Prostate gland (tissue), 2 donors: ENCODE measurements at regions of chr17 and their contacts with region 1.

Region 1: GRCh38 chr17:27332485-27333409 is 38.8 kb downstream of the WSB1 start:
- DNase-seq: peak; percentile 95
- H3K4me3 ChIP-seq: peak overlapping the region; percentile 28 to 39
- H3K27ac ChIP-seq: peak overlapping the region; percentile 82 to 86
- H3K4me1 ChIP-seq: peaks cover 3% of the 10 kb centered on the region
- H3K27me3 ChIP-seq: no peaks in the 10 kb centered on the region
- CTCF ChIP-seq: peak; percentile 69 to 97 (median 94)
- POLR2A ChIP-seq: no peak

Region 2: GRCh38 chr17:27236717-27237315 is 95.9 kb before region 1 on chr17:
- intact Hi-C with region 1: loop called (anchors 2 kb)
- DNase-seq: peak; percentile 84
- H3K4me3 ChIP-seq: no peak overlapping the region
- H3K27ac ChIP-seq: no peak overlapping the region
- H3K4me1 ChIP-seq: no peaks in the 10 kb centered on the region
- H3K27me3 ChIP-seq: no peaks in the 10 kb centered on the region
- CTCF ChIP-seq: peak; percentile 82 to 94 (median 92)
- POLR2A ChIP-seq: no peak

Region 3: GRCh38 chr17:27293898-27294688 is 38.7 kb before region 1 on chr17 and contains the start of gene WSB1:
- intact Hi-C with region 1: loop called (anchors 1 kb)
- DNase-seq: peak; percentile 94
- H3K4me3 ChIP-seq: peak within 1 kb of the TSS; percentile 82 to 96
- H3K27ac ChIP-seq: peak within 1 kb of the TSS; percentile 99 to 100
- H3K4me1 ChIP-seq: no peaks in the 10 kb centered on the region
- H3K27me3 ChIP-seq: no peaks in the 10 kb centered on the region
- CTCF ChIP-seq: peak in 3 of 4 experiments; percentile 4 to 40 (median 17)
- POLR2A ChIP-seq: peak; percentile 99
- total RNA-seq, gene WSB1: 45.7 to 116 TPM

Region 4: GRCh38 chr17:27390540-27390939 is 57.8 kb after region 1 on chr17:
- intact Hi-C with region 1: no loop called
- DNase-seq: no peak
- H3K4me3 ChIP-seq: no peak overlapping the region
- H3K27ac ChIP-seq: no peak overlapping the region
- H3K4me1 ChIP-seq: no peaks in the 10 kb centered on the region
- H3K27me3 ChIP-seq: no peaks in the 10 kb centered on the region
- CTCF ChIP-seq: no peak
- POLR2A ChIP-seq: no peak

Region 5: GRCh38 chr17:27455914-27456680 is 123.3 kb after region 1 on chr17 and contains the start of gene KSR1:
- intact Hi-C with region 1: no loop called
- DNase-seq: peak; percentile 75
- H3K4me3 ChIP-seq: peak within 1 kb of the TSS; percentile 63 to 70
- H3K27ac ChIP-seq: peak within 1 kb of the TSS; percentile 74 to 80
- H3K4me1 ChIP-seq: peaks cover 2% of the 10 kb centered on the region
- H3K27me3 ChIP-seq: no peaks in the 10 kb centered on the region
- CTCF ChIP-seq: peak in 3 of 4 experiments; percentile 24 to 44 (median 30)
- POLR2A ChIP-seq: peak; percentile 75
- total RNA-seq, gene KSR1: 11.5 to 23.7 TPM